ENCODE measurements at regions of chr16 and their contacts with region 1.

Region 1: GRCh38 chr16:4461250-4462085 is 13.0 kb downstream of the NMRAL1 start:
- DNase-seq: no peak
- H3K4me3 ChIP-seq: no peak overlapping the region
- H3K27ac ChIP-seq: no peak overlapping the region
- H3K4me1 ChIP-seq: no peaks in the 10 kb centered on the region
- H3K27me3 ChIP-seq: no peaks in the 10 kb centered on the region
- CTCF ChIP-seq: no peak

Region 2: GRCh38 chr16:4307215-4308037 is 154.0 kb before region 1 on chr16:
- intact Hi-C with region 1: no loop called
- DNase-seq: peak; percentile 65 to 97
- H3K4me3 ChIP-seq: peak overlapping the region; percentile 53
- H3K27ac ChIP-seq: peak overlapping the region; percentile 77 to 85
- H3K4me1 ChIP-seq: peaks cover 0 to 7% of the 10 kb centered on the region in 2 donors
- H3K27me3 ChIP-seq: no peaks in the 10 kb centered on the region
- CTCF ChIP-seq: no peak

Region 3: DNA sequence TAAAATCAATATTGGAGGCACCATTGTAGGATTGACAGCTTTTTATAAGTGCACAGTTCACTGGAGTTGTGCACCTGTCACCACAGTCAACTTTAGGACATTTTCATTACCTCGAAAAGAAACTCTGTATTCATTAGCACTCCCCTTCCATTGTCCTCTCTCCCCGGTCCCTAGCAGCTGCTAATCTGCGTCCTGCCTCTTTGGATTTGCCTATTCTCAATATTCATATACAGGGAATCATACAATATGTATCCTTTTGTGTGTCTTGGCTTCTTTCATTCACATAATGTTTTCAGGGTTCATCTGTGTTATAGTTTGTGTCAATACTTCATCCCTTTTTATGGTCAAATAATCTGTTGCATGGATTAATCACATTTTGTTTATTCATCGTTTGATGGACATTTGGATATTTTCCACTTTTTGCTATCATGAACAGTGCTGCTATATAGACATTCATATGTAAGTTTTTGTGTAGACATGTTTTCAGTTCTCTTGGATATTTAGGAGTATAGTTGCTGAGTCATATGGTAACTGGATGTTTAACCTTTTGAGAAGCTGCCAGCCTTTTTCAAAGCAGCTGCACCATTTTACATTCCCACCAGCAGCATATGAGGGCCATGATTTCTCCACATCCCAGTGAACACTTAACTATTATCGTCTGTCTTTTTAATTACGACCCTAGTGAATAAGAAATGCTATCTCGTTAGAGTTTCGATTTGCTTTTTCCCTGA is 26.0 kb before region 1 on chr16:
- intact Hi-C with region 1: loop called (anchors 1 kb)
- DNase-seq: no peak
- H3K4me3 ChIP-seq: no peak overlapping the region
- H3K27ac ChIP-seq: no peak overlapping the region
- H3K4me1 ChIP-seq: no peaks in the 10 kb centered on the region
- H3K27me3 ChIP-seq: no peaks in the 10 kb centered on the region
- CTCF ChIP-seq: no peak

Region 4: GRCh38 chr16:4538350-4539235 is 77.1 kb after region 1 on chr16 and contains the start of gene CDIP1:
- intact Hi-C with region 1: no loop called
- DNase-seq: peak; percentile 91 to 98
- H3K4me3 ChIP-seq: peak within 1 kb of the TSS; percentile 71 to 95
- H3K27ac ChIP-seq: peak within 1 kb of the TSS; percentile 87 to 90
- H3K4me1 ChIP-seq: peaks cover 13 to 16% of the 10 kb centered on the region in 2 donors
- H3K27me3 ChIP-seq: no peaks in the 10 kb centered on the region
- CTCF ChIP-seq: peak in 1 of 3 experiments; percentile 8
- total RNA-seq, gene CDIP1: 36.9 TPM

Region 5: DNA sequence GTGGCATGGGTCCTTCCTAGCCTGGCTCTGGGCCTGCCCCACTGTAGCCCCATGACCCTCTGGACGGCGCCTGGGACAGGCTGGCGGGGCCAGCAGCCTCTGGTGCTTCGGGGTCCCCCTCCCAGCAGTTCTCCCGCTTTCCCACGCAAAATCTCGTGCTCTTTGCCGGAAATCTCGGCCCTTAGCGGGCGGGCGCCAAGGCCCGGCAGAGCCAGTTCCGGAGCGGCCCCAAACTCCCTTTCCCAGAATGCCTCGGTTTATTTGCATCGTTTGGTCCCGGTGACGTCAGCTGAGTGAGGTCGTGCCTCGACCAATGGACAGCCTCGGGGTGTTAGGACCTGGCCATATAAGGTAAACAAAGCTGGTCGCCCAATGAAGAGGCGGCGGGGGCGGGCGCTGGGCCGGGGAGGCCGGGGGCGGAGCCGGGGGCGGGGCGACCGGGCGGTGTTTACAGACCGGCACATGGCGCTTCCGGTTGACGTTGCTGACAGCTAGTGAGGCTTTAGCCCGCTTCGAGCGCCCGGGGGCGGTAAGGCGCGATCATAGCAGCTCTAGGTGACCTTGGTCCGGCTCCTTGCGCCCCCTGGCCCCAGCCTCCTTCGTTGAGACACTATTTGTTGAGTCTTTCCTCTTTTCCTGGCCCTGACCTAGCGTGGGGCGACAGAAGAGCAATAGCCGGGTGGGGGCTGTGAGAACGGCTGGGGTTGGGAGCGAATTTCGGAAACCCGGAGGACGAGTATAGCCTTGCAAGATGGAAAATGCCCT is 154.8 kb after region 1 on chr16:
- intact Hi-C with region 1: no loop called
- DNase-seq: peak; percentile 100
- H3K4me3 ChIP-seq: peak overlapping the region; percentile 92 to 98
- H3K27ac ChIP-seq: peak overlapping the region; percentile 91 to 98
- H3K4me1 ChIP-seq: peaks cover 23 to 41% of the 10 kb centered on the region in 2 donors
- H3K27me3 ChIP-seq: no peaks in the 10 kb centered on the region
- CTCF ChIP-seq: peak; percentile 41 to 56 (median 52)

Measured in ascending aorta (tissue), 2 donors.